ENCODE measurements at regions of chr1 and their contacts with region 1.

Region 1: GRCh38 chr1:38071312-38072256 is 25.0 kb upstream of the POU3F1 start:
- DNase-seq: no peak
- ATAC-seq: peak; percentile 93
- H3K4me3 ChIP-seq: no peak overlapping the region
- H3K27ac ChIP-seq: no peak overlapping the region
- H3K4me1 ChIP-seq: no peaks in the 10 kb centered on the region
- H3K27me3 ChIP-seq: no peaks in the 10 kb centered on the region
- CTCF ChIP-seq: peak; percentile 51 to 58 (median 58); a peak in 5 of 6 replicates
- EP300 ChIP-seq: no peak
- POLR2A ChIP-seq: no peak
- RAD21 ChIP-seq: peak; percentile 66

Region 2: GRCh38 chr1:37692078-37692833 is 379.3 kb before region 1 on chr1 and contains the start of gene CDCA8:
- CTCF ChIA-PET with region 1: no interaction called
- POLR2A ChIA-PET with region 1: no interaction called
- RAD21 ChIA-PET with region 1: no interaction called
- SMC1A ChIA-PET with region 1: no interaction called
- in situ Hi-C with region 1: no loop called
- intact Hi-C with region 1: no loop called
- DNase-seq: peak; percentile 93
- ATAC-seq: peak; percentile 93
- H3K4me3 ChIP-seq: peak within 1 kb of the TSS; percentile 94
- H3K27ac ChIP-seq: peak within 1 kb of the TSS; percentile 92
- H3K4me1 ChIP-seq: peaks cover 12% of the 10 kb centered on the region
- H3K27me3 ChIP-seq: no peaks in the 10 kb centered on the region
- CTCF ChIP-seq: peak; percentile 70 to 72 (median 71)
- EP300 ChIP-seq: no peak
- POLR2A ChIP-seq: peak; percentile 95
- RAD21 ChIP-seq: no peak
- polyA plus RNA-seq, gene CDCA8: 60.2 to 60.6 TPM

Region 3: GRCh38 chr1:37989361-37989930 is 82.1 kb before region 1 on chr1:
- CTCF ChIA-PET with region 1: interaction called, 6 read pairs
- POLR2A ChIA-PET with region 1: no interaction called
- RAD21 ChIA-PET with region 1: interaction called, 6 read pairs
- SMC1A ChIA-PET with region 1: interaction called, 3 read pairs
- in situ Hi-C with region 1: no loop called
- intact Hi-C with region 1: loop called (anchors 1 kb)
- DNase-seq: no peak
- ATAC-seq: peak; percentile 48
- H3K4me3 ChIP-seq: peak overlapping the region; percentile 95
- H3K27ac ChIP-seq: peak overlapping the region; percentile 83
- H3K4me1 ChIP-seq: peaks cover 4% of the 10 kb centered on the region; the same call in 1 of the 2 replicates
- H3K27me3 ChIP-seq: no peaks in the 10 kb centered on the region
- CTCF ChIP-seq: no peak
- EP300 ChIP-seq: no peak
- POLR2A ChIP-seq: no peak
- RAD21 ChIP-seq: no peak

Region 4: GRCh38 chr1:38026592-38027200 is 44.9 kb before region 1 on chr1:
- CTCF ChIA-PET with region 1: interaction called, 252 read pairs
- POLR2A ChIA-PET with region 1: interaction called, 4 read pairs
- RAD21 ChIA-PET with region 1: interaction called, 173 read pairs
- SMC1A ChIA-PET with region 1: interaction called, 77 read pairs
- in situ Hi-C with region 1: no loop called
- intact Hi-C with region 1: loop called (anchors 1 kb)
- DNase-seq: no peak
- ATAC-seq: peak; percentile 14
- H3K4me3 ChIP-seq: no peak overlapping the region
- H3K27ac ChIP-seq: peak overlapping the region; percentile 43
- H3K4me1 ChIP-seq: peaks cover 52% of the 10 kb centered on the region
- H3K27me3 ChIP-seq: no peaks in the 10 kb centered on the region
- CTCF ChIP-seq: peak; percentile 65 to 83 (median 72)
- EP300 ChIP-seq: no peak
- POLR2A ChIP-seq: no peak
- RAD21 ChIP-seq: peak; percentile 86

Region 5: DNA sequence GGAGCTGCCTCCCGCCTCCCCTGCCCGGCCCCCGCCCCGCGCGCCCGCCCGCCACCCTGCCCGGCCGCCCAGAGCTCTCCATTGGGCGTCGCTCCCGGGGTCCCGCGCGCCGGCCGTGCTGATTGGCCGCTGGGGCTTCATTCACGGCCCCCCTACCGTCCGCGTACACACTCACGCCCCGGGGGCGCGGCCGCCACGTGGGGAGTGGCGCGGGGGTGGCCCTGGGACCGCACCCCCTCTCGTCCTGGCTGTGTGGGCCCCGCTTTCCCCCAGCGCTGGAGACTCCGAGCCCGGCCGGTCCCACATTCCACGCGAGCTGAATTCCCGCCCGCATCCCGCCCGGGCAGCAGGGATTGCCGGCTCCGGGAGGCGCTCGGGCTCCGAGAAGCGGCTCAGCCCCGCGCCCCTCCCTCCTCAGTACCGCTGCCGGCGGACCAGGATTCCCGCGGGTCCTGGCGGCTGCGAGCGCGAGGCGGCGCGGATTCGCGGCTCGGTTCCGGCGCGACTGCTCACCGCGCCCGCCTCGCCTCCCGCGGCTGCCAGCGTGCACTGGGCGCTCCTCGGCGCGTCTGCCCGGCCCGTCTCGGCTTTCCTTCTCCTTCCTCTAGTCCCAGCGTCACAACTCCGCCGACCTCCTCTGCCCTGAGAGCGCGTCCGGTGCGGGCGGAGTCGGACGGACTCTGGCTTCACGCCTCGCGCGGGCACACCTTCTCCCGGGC is 24.5 kb before region 1 on chr1:
- CTCF ChIA-PET with region 1: interaction called, 179 read pairs
- POLR2A ChIA-PET with region 1: interaction called, 5 read pairs
- RAD21 ChIA-PET with region 1: interaction called, 123 read pairs
- SMC1A ChIA-PET with region 1: interaction called, 316 read pairs
- in situ Hi-C with region 1: no loop called
- intact Hi-C with region 1: no loop called
- DNase-seq: no peak
- ATAC-seq: peak; percentile 87
- H3K4me3 ChIP-seq: peak overlapping the region; percentile 57; the same call in 1 of the 2 replicates
- H3K27ac ChIP-seq: no peak overlapping the region
- H3K4me1 ChIP-seq: peaks cover 15% of the 10 kb centered on the region
- H3K27me3 ChIP-seq: peaks cover 9 to 13% of the 10 kb centered on the region in 2 experiments
- CTCF ChIP-seq: no peak
- EP300 ChIP-seq: no peak
- POLR2A ChIP-seq: no peak
- RAD21 ChIP-seq: no peak

Region 6: GRCh38 chr1:38088366-38088765 is 16.8 kb after region 1 on chr1:
- CTCF ChIA-PET with region 1: interaction called, 19 read pairs
- POLR2A ChIA-PET with region 1: interaction called, 3 read pairs
- RAD21 ChIA-PET with region 1: interaction called, 23 read pairs
- SMC1A ChIA-PET with region 1: interaction called, 16 read pairs
- in situ Hi-C with region 1: no loop called
- intact Hi-C with region 1: no loop called
- DNase-seq: no peak
- ATAC-seq: peak; percentile 37
- H3K4me3 ChIP-seq: no peak overlapping the region
- H3K27ac ChIP-seq: no peak overlapping the region
- H3K4me1 ChIP-seq: no peaks in the 10 kb centered on the region
- H3K27me3 ChIP-seq: no peaks in the 10 kb centered on the region
- CTCF ChIP-seq: peak in 1 of 3 experiments; percentile 12; a peak in 1 of 6 replicates
- EP300 ChIP-seq: no peak
- POLR2A ChIP-seq: no peak
- RAD21 ChIP-seq: no peak

Region 7: DNA sequence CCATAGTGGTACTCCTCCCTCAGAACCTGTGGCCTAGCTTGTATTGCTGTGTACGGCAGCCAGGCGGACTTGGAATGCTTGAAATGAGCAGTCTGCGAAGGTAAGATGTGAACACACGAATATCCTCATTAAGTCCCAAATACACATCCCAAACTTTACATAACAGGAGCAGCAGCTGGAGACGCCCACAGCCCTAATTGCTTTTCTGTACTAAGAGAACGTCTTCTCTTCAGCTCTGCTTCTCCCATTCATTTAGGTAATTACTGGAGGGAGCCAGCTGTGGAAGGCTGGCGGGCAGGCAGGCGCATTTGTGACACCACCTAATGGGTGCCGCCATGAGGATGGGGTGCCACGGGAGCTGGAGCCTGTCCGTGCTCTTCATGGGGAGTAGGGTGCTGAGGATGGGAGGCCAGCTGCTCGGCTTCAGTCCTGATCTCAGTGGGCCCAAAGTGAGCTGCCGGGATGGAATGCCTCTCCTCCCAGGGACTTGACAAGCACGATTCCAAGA is 41.6 kb after region 1 on chr1:
- CTCF ChIA-PET with region 1: no interaction called
- POLR2A ChIA-PET with region 1: no interaction called
- RAD21 ChIA-PET with region 1: no interaction called
- SMC1A ChIA-PET with region 1: no interaction called
- in situ Hi-C with region 1: no loop called
- intact Hi-C with region 1: no loop called
- DNase-seq: no peak
- ATAC-seq: no peak
- H3K4me3 ChIP-seq: no peak overlapping the region
- H3K27ac ChIP-seq: no peak overlapping the region
- H3K4me1 ChIP-seq: no peaks in the 10 kb centered on the region
- H3K27me3 ChIP-seq: no peaks in the 10 kb centered on the region
- CTCF ChIP-seq: no peak
- EP300 ChIP-seq: no peak
- POLR2A ChIP-seq: no peak
- RAD21 ChIP-seq: no peak

Region 8: GRCh38 chr1:38173157-38173831 is 101.7 kb after region 1 on chr1:
- CTCF ChIA-PET with region 1: interaction called, 7 read pairs
- POLR2A ChIA-PET with region 1: no interaction called
- RAD21 ChIA-PET with region 1: interaction called, 13 read pairs
- SMC1A ChIA-PET with region 1: interaction called, 15 read pairs
- in situ Hi-C with region 1: no loop called
- intact Hi-C with region 1: no loop called
- DNase-seq: peak; percentile 86
- ATAC-seq: peak; percentile 90
- H3K4me3 ChIP-seq: 0 out of 2 replicates have a peak overlapping the region, but pooled peaks have one; percentile 1
- H3K27ac ChIP-seq: peak overlapping the region; percentile 93
- H3K4me1 ChIP-seq: peaks cover 30% of the 10 kb centered on the region
- H3K27me3 ChIP-seq: no peaks in the 10 kb centered on the region
- CTCF ChIP-seq: no peak
- EP300 ChIP-seq: peak in 1 of 2 experiments; percentile 62; a peak in 2 of 4 replicates
- POLR2A ChIP-seq: no peak
- RAD21 ChIP-seq: 0 out of 2 replicates have a peak, but pooled peaks have one; percentile 8

Region 9: DNA sequence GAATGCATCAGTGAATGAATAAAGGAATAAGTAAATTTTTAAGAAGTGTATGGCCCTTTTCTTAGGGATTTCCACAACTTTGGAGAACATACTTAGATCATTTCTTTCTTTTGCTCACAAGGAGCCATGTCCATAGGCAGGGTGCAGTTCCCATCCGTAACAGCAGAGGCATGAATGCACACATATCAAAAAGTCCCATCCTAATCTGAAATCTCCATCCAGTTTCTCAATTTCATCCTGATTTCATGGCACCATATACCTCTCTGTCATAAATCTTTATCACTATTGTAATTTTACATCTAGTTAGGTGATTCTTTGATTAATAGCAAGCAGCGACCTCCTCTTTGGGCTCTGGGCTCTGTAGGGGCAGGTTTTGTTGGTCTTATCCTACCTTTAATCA is 428.8 kb after region 1 on chr1:
- CTCF ChIA-PET with region 1: interaction called, 12 read pairs
- POLR2A ChIA-PET with region 1: no interaction called
- RAD21 ChIA-PET with region 1: interaction called, 4 read pairs
- SMC1A ChIA-PET with region 1: interaction called, 8 read pairs
- in situ Hi-C with region 1: no loop called
- intact Hi-C with region 1: no loop called
- DNase-seq: no peak
- ATAC-seq: peak; percentile 57; the same call in 2 of the 3 replicates
- H3K4me3 ChIP-seq: no peak overlapping the region
- H3K27ac ChIP-seq: no peak overlapping the region
- H3K4me1 ChIP-seq: peaks cover 4% of the 10 kb centered on the region
- H3K27me3 ChIP-seq: no peaks in the 10 kb centered on the region; a peak in 1 of 4 replicates
- CTCF ChIP-seq: peak in 2 of 3 experiments; percentile 53 to 58; a peak in 4 of 6 replicates
- EP300 ChIP-seq: no peak
- POLR2A ChIP-seq: no peak
- RAD21 ChIP-seq: peak; percentile 32